Calu3 (cell line): ENCODE measurements at regions of chr3 and their contacts with region 1.

Region 1: DNA sequence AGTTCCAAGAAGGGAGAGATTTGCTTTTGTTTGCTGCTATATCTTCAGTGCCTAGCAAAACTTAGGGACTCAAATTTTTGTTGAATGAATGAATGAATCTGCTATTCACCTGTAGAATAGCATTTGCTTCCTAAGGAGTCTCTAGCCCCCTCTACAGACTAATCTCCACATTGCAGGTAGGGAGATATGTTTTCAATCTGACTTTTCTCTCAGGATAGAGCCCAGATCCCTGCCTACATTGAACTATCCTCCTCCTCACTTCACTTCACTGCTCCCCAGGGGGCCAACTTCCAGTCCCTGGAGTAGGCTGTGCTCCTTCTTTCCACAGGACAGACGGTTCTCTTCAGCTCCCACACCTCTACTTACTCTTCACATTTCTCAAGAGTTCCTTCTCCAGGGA is 81.9 kb upstream of the PTX3 start:
- DNase-seq: peak; percentile 70
- H3K4me3 Mint-ChIP-seq: no peak overlapping the region
- H3K27ac Mint-ChIP-seq: no peak overlapping the region
- H3K4me1 Mint-ChIP-seq: peaks cover 8% of the 10 kb centered on the region
- H3K27me3 Mint-ChIP-seq: no peaks in the 10 kb centered on the region
- CTCF ChIP-seq: peak; percentile 29

Region 2: GRCh38 chr3:157148196-157148889 is 206.4 kb before region 1 on chr3:
- CTCF ChIA-PET with region 1: no interaction called
- intact Hi-C with region 1: no loop called
- DNase-seq: no peak
- H3K4me3 Mint-ChIP-seq: no peak overlapping the region
- H3K27ac Mint-ChIP-seq: peak overlapping the region; percentile 20
- H3K4me1 Mint-ChIP-seq: peaks cover 36% of the 10 kb centered on the region
- H3K27me3 Mint-ChIP-seq: no peaks in the 10 kb centered on the region
- CTCF ChIP-seq: no peak

Region 3: GRCh38 chr3:157248590-157249422 is 105.9 kb before region 1 on chr3:
- CTCF ChIA-PET with region 1: no interaction called
- intact Hi-C with region 1: loop called (anchors 10 kb)
- DNase-seq: peak; percentile 67
- H3K4me3 Mint-ChIP-seq: no peak overlapping the region
- H3K27ac Mint-ChIP-seq: peak overlapping the region; percentile 21
- H3K4me1 Mint-ChIP-seq: peaks cover 19% of the 10 kb centered on the region
- H3K27me3 Mint-ChIP-seq: no peaks in the 10 kb centered on the region
- CTCF ChIP-seq: no peak

Region 4: DNA sequence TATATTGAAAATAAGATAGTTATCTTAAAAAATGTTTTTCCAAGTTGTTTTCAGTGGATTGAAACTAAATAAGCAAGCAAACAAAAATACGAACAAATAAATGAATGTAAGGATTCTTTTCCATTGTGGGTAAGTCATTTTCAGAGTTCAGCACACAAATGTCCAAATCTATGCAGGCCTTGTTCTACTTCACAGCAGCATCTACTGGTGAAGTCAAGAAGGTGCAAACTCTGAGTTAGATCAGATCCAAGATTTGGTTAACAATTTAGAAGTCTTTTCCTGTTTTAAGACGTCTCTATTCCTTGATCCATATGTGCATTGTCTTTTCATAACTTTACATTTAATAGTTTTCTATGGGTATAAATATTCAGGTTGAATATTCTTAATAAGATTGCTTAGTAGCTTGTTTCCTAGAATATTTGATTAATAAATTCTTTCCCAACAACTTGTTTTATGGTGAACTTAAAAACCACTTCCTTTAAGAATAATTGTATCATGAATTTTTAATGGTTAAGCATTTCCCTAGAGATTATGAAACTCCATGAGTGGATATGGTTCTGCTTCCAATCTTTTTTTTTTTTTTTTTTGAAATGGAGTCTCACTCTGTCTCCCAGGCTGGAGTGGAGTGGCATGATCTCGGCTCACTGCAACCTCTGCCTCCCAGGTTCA is 92.4 kb after region 1 on chr3:
- CTCF ChIA-PET with region 1: interaction called, 4 read pairs
- intact Hi-C with region 1: loop called (anchors 5 kb)
- DNase-seq: peak; percentile 17
- H3K4me3 Mint-ChIP-seq: no peak overlapping the region
- H3K27ac Mint-ChIP-seq: no peak overlapping the region
- H3K4me1 Mint-ChIP-seq: no peaks in the 10 kb centered on the region
- H3K27me3 Mint-ChIP-seq: no peaks in the 10 kb centered on the region
- CTCF ChIP-seq: peak; percentile 54

Region 5: DNA sequence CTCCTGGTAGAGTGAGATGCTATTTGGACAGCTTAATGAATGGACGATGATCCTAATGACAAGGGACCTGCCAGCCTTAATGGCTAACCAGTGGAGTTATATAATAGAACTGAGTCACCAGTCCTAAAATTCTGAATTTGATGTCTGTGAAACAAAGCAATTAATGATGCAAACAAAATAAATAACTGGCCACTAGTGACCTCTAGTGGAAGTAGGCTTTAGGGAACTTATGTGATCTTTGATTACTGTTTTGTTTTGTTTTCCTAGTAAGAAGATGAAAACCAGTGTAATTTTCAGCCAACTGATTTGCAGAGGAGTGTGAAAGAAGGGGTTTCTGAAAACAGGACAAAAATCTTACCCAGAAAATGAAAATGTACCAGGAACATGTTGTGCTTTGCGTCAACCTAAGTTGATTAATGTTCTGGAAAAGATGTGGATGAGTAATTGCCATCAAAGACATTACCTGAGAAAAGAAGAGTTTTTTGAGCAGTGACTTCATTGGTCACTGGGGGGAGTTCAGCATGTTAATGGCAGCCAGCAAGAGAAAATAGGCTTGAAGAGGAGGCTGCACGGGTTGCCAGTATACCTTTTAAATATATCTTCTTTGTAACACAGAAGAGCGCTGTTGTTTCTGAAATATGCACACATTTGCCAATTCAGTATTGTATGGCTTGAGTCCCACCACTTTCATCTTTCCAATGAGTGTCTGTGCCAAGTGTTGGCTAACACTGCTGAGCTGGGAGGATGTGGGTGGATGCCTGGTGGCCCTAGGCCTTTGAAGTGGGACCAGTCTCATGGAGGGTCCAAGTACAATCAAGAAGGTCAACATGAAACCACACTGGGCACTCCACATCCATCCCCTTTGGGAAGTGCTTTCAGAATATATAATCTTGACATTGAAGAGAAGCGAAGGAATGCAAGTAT is 139.2 kb after region 1 on chr3:
- CTCF ChIA-PET with region 1: no interaction called
- intact Hi-C with region 1: loop called (anchors 5 kb)
- DNase-seq: peak; percentile 36
- H3K4me3 Mint-ChIP-seq: no peak overlapping the region
- H3K27ac Mint-ChIP-seq: no peak overlapping the region
- H3K4me1 Mint-ChIP-seq: peaks cover 43% of the 10 kb centered on the region
- H3K27me3 Mint-ChIP-seq: no peaks in the 10 kb centered on the region
- CTCF ChIP-seq: peak; percentile 62

Region 6: GRCh38 chr3:157810924-157811718 is 456.4 kb after region 1 on chr3:
- CTCF ChIA-PET with region 1: no interaction called
- intact Hi-C with region 1: no loop called
- DNase-seq: no peak
- H3K4me3 Mint-ChIP-seq: no peak overlapping the region
- H3K27ac Mint-ChIP-seq: no peak overlapping the region
- H3K4me1 Mint-ChIP-seq: no peaks in the 10 kb centered on the region
- H3K27me3 Mint-ChIP-seq: no peaks in the 10 kb centered on the region
- CTCF ChIP-seq: no peak